ENCODE measurements at regions of chr11 and their contacts with region 1.

Region 1: GRCh38 chr11:105202844-105203548 is 63.4 kb upstream of the CARD18 start:
- DNase-seq: peak; percentile 96
- ATAC-seq: peak; percentile 96
- H3K4me3 ChIP-seq: no peak overlapping the region; a peak in 1 of 6 replicates
- H3K27ac ChIP-seq: peak overlapping the region; percentile 68
- H3K4me1 ChIP-seq: peaks cover 71% of the 10 kb centered on the region
- H3K27me3 ChIP-seq: no peaks in the 10 kb centered on the region
- CTCF ChIP-seq: no peak
- EP300 ChIP-seq: peak in 1 of 2 experiments; percentile 90; a peak in 2 of 4 replicates
- POLR2A ChIP-seq: no peak
- RAD21 ChIP-seq: 0 out of 2 replicates have a peak, but pooled peaks have one; percentile 13

Region 2: GRCh38 chr11:104968355-104968855 is 234.6 kb before region 1 on chr11 and contains the start of gene CASP4:
- CTCF ChIA-PET with region 1: no interaction called
- POLR2A ChIA-PET with region 1: interaction called, 7 read pairs
- in situ Hi-C with region 1: no loop called
- intact Hi-C with region 1: loop called (anchors 2 kb)
- DNase-seq: peak; percentile 56
- ATAC-seq: peak; percentile 52
- H3K4me3 ChIP-seq: peak within 1 kb of the TSS; percentile 67 to 84 (median 78)
- H3K27ac ChIP-seq: peak within 1 kb of the TSS; percentile 72
- H3K4me1 ChIP-seq: peaks cover 33% of the 10 kb centered on the region
- H3K27me3 ChIP-seq: no peaks in the 10 kb centered on the region; a peak in 1 of 5 replicates
- CTCF ChIP-seq: no peak
- EP300 ChIP-seq: peak in 1 of 2 experiments; percentile 23; a peak in 1 of 4 replicates
- POLR2A ChIP-seq: peak in 1 of 2 experiments; percentile 52; a peak in 2 of 4 replicates
- RAD21 ChIP-seq: no peak
- total RNA-seq, gene CASP4: 69.8 and 98.1 TPM in 2 replicates

Region 3: DNA sequence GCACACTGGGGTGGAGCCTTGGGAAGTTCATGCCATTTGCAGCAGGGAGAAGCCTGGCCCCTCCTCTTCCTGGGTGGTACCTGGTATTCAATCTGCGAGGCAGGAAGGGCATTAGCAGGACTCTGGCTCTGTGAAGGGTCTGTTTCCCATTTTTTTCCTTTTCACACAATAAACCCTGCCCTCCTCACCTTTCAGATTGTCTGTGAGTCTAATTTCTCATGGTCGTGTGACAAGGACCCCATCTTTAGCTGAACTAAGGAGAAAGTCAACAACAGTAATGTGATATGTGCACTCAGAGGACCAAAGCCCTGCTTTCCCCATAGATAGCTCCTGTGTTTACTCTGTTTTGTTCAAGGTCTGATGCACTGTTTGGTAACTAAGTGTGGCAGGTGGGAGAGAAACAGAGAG is 208.0 kb before region 1 on chr11:
- CTCF ChIA-PET with region 1: no interaction called
- POLR2A ChIA-PET with region 1: interaction called, 3 read pairs
- in situ Hi-C with region 1: no loop called
- intact Hi-C with region 1: loop called (anchors 1 kb)
- DNase-seq: peak; percentile 85
- ATAC-seq: peak; percentile 98
- H3K4me3 ChIP-seq: peak overlapping the region in 2 of 3 experiments; percentile 40; a peak in 3 of 6 replicates
- H3K27ac ChIP-seq: peak overlapping the region; percentile 60
- H3K4me1 ChIP-seq: peaks cover 40% of the 10 kb centered on the region
- H3K27me3 ChIP-seq: peaks cover 0 to 6% of the 10 kb centered on the region in 2 experiments; a peak in 1 of 5 replicates
- CTCF ChIP-seq: no peak
- EP300 ChIP-seq: peak; percentile 45 to 71; a peak in 2 of 4 replicates
- POLR2A ChIP-seq: peak in 1 of 2 experiments; percentile 29; a peak in 1 of 4 replicates
- RAD21 ChIP-seq: no peak

Region 4: GRCh38 chr11:105051264-105051958 is 151.6 kb before region 1 on chr11:
- CTCF ChIA-PET with region 1: no interaction called
- POLR2A ChIA-PET with region 1: no interaction called
- in situ Hi-C with region 1: no loop called
- intact Hi-C with region 1: loop called (anchors 2 kb)
- DNase-seq: peak; percentile 84
- ATAC-seq: peak; percentile 95
- H3K4me3 ChIP-seq: no peak overlapping the region; a peak in 1 of 6 replicates
- H3K27ac ChIP-seq: peak overlapping the region; percentile 62
- H3K4me1 ChIP-seq: peaks cover 68% of the 10 kb centered on the region
- H3K27me3 ChIP-seq: no peaks in the 10 kb centered on the region
- CTCF ChIP-seq: no peak
- EP300 ChIP-seq: peak in 1 of 2 experiments; percentile 86; a peak in 2 of 4 replicates
- POLR2A ChIP-seq: no peak
- RAD21 ChIP-seq: no peak

Region 5: GRCh38 chr11:105229257-105229656 is 26.3 kb after region 1 on chr11:
- CTCF ChIA-PET with region 1: no interaction called
- POLR2A ChIA-PET with region 1: no interaction called
- in situ Hi-C with region 1: no loop called
- intact Hi-C with region 1: no loop called
- DNase-seq: no peak
- ATAC-seq: no peak
- H3K4me3 ChIP-seq: no peak overlapping the region
- H3K27ac ChIP-seq: no peak overlapping the region
- H3K4me1 ChIP-seq: peaks cover 17% of the 10 kb centered on the region
- H3K27me3 ChIP-seq: no peaks in the 10 kb centered on the region
- CTCF ChIP-seq: no peak
- EP300 ChIP-seq: no peak
- POLR2A ChIP-seq: no peak
- RAD21 ChIP-seq: no peak

Region 6: DNA sequence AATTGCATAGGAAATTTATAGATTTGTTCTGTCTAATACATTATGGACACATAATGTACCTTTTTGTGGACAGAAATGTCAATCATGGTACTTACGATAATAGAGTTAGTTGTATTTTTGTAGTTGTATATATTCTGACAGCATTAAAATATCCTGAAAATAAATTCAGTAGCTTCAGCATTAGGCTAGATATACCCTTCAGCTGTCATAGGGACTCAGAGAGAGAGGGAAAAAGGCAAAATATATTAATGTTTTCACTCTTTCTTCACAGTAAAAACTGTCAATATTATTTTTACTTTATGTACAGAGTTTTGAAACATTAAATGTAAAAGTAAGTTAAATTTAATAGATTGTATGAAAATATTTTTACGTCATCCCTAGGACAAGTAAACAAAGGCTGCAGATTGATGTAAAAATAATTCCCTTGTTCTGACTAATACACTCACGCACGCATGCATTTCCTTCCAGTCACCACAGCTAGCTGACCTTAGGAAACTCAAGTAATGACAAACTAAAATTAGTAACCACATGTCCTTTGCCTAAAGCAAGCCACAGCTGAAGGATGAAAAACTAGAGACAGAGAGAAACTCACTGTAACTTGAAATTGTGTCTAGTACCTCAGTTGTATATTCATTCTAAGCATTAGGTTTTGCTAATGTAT is 41.3 kb after region 1 on chr11:
- CTCF ChIA-PET with region 1: no interaction called
- POLR2A ChIA-PET with region 1: no interaction called
- in situ Hi-C with region 1: no loop called
- intact Hi-C with region 1: no loop called
- DNase-seq: no peak
- ATAC-seq: no peak
- H3K4me3 ChIP-seq: no peak overlapping the region
- H3K27ac ChIP-seq: no peak overlapping the region
- H3K4me1 ChIP-seq: no peaks in the 10 kb centered on the region
- H3K27me3 ChIP-seq: no peaks in the 10 kb centered on the region
- CTCF ChIP-seq: no peak
- EP300 ChIP-seq: no peak
- POLR2A ChIP-seq: no peak
- RAD21 ChIP-seq: no peak

Region 7: GRCh38 chr11:105315287-105315686 is 112.3 kb after region 1 on chr11:
- CTCF ChIA-PET with region 1: no interaction called
- POLR2A ChIA-PET with region 1: no interaction called
- in situ Hi-C with region 1: no loop called
- intact Hi-C with region 1: loop called (anchors 5 kb)
- DNase-seq: peak; percentile 15
- ATAC-seq: peak; percentile 90
- H3K4me3 ChIP-seq: no peak overlapping the region
- H3K27ac ChIP-seq: no peak overlapping the region
- H3K4me1 ChIP-seq: no peaks in the 10 kb centered on the region
- H3K27me3 ChIP-seq: no peaks in the 10 kb centered on the region
- CTCF ChIP-seq: no peak
- EP300 ChIP-seq: no peak
- POLR2A ChIP-seq: no peak
- RAD21 ChIP-seq: no peak